A549 (cell line): ENCODE measurements at regions of chr19 and their contacts with region 1.

Region 1: DNA sequence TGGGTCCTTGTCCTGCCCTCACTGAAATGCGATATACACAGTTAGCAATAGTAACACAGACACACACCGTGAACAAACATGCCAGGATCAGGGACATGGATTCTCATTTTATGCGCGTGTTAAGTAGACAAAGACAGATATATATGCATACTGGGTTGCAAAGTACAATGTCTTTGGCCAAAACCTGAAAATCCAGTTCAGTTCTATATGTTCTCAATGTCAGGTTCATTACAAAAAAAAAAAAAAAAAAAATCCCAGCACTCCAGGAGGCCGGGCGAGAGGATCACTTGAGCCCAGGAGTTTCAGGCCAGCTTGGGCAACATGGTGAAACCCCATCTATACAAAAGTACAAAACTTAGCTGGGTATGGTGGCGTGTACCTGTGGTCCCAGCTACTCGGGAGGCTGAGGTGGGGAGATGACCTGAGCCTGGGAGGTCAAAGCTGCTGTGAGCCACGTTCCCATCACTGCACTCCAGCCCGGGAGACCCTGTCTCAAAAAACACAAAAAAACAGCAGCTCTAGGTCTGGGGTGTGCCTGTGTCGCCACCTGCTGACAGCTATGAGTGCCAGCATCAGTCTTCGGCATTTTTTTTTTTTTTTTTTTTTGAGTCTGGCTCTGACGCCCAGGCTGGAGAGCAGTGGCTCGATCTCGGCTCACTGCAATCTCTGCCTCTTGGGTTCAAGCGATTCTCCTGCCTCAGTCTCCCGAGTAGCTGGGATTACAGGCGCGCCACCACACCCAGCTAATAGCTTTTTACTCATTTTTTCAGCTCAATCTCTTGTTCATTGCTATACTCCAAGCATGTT is 10.3 kb downstream of the AP2S1 start:
- DNase-seq: peak in 1 of 2 experiments; percentile 77
- ATAC-seq: peak; percentile 61 to 77; a peak in 5 of 6 replicates
- H3K4me3 ChIP-seq: no peak overlapping the region
- H3K27ac ChIP-seq: peak overlapping the region in 1 of 2 experiments; percentile 20; a peak in 2 of 6 replicates
- H3K4me1 ChIP-seq: peaks cover 18% of the 10 kb centered on the region; the same call in 2 of the 3 replicates
- CTCF ChIP-seq: peak; percentile 96
- EP300 ChIP-seq: no peak
- POLR2A ChIP-seq: no peak
- RAD21 ChIP-seq: peak; percentile 95

Region 2: DNA sequence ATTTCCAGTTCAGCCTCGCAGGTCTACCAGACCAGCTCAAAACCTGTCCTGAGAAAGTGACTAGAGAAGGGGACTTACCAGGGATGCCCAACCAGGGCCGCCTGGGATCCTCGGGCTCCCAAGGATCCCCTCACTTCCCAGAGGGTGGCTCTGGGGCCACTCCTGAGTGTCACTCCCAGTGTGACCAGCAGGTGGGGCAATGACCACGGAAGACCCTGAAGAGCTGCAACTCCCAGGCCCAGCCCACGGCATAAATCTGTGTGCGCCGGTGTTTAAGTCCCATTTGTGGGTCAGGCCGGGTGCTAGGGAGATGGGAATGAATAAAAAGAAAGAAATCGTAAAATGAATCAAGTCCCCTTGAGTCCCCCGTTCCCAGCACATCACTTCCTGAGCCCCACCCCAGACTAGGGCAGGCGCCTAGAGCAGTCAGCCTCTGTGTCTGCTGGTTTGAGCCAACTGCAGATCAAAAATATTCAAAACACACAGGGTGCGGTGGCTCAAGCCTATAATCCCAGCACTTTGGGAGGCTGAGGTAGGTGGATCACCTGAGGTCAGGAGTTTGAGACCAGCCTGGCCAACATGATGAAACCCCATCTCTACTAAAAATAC is 226.1 kb before region 1 on chr19:
- CTCF ChIA-PET with region 1: interaction called, 10 read pairs
- POLR2A ChIA-PET with region 1: no interaction called
- DNase-seq: peak; percentile 86 to 97
- ATAC-seq: peak; percentile 80 to 92
- H3K4me3 ChIP-seq: no peak overlapping the region
- H3K27ac ChIP-seq: peak overlapping the region; percentile 18 to 52; a peak in 2 of 6 replicates
- H3K4me1 ChIP-seq: 0 out of 3 replicates have a peak, but pooled peaks cover 8% of the 10 kb centered on the region
- CTCF ChIP-seq: peak; percentile 91
- EP300 ChIP-seq: no peak
- POLR2A ChIP-seq: no peak
- RAD21 ChIP-seq: peak; percentile 79 to 84

Region 3: GRCh38 chr19:46736544-46737297 is 103.6 kb before region 1 on chr19:
- CTCF ChIA-PET with region 1: interaction called, 11 read pairs
- POLR2A ChIA-PET with region 1: no interaction called
- DNase-seq: no peak
- ATAC-seq: no peak
- H3K4me3 ChIP-seq: no peak overlapping the region
- H3K27ac ChIP-seq: no peak overlapping the region
- H3K4me1 ChIP-seq: peaks cover 24% of the 10 kb centered on the region
- CTCF ChIP-seq: no peak
- EP300 ChIP-seq: no peak
- POLR2A ChIP-seq: no peak
- RAD21 ChIP-seq: no peak

Region 4: GRCh38 chr19:46788262-46788967 is 51.9 kb before region 1 on chr19 and contains the start of gene SLC1A5:
- CTCF ChIA-PET with region 1: interaction called, 130 read pairs
- POLR2A ChIA-PET with region 1: interaction called, 51 read pairs
- DNase-seq: peak; percentile 99
- ATAC-seq: peak; percentile 51 to 77
- H3K4me3 ChIP-seq: peak within 1 kb of the TSS; percentile 66
- H3K27ac ChIP-seq: peak within 1 kb of the TSS; percentile 96 to 97
- H3K4me1 ChIP-seq: peaks cover 40% of the 10 kb centered on the region
- CTCF ChIP-seq: peak; percentile 4; the same call in 1 of the 3 replicates
- EP300 ChIP-seq: 0 out of 5 replicates have a peak, but pooled peaks of 1 of the 2 experiments have one; percentile 13
- POLR2A ChIP-seq: peak; percentile 100
- RAD21 ChIP-seq: peak; percentile 20 to 28; a peak in 3 of 5 replicates
- polyA plus RNA-seq, gene SLC1A5: 302 and 306 TPM in 2 replicates

Region 5: DNA sequence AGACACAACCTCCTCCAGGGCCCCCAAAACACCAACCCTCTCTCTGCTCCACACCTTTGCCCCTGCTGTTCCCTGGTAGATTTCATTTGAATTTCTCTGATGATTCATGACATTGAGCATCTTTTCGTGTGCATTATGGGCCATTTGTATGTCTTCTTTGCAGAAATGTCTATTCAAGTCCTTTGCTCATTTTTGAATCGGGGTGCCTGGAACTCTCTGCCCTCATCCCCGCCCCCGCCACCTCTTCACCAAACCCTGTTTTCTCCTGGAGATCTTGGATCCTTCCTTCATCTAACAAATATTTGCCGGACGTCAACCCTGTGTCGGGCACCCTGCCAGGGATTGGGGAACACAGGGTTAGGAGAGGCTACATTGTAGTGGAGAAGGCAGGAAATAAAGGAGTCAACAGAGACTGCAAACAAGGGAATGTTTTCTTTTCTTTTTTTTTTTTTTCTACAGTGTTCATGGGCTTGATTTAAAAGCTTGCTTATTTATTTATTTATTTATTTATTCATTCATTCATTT is 26.4 kb before region 1 on chr19:
- CTCF ChIA-PET with region 1: interaction called, 16 read pairs
- POLR2A ChIA-PET with region 1: no interaction called
- DNase-seq: peak; percentile 47 to 84
- ATAC-seq: peak; percentile 65 to 75
- H3K4me3 ChIP-seq: no peak overlapping the region
- H3K27ac ChIP-seq: peak overlapping the region; percentile 38 to 74
- H3K4me1 ChIP-seq: peaks cover 18% of the 10 kb centered on the region
- CTCF ChIP-seq: no peak
- EP300 ChIP-seq: no peak
- POLR2A ChIP-seq: no peak
- RAD21 ChIP-seq: no peak

Region 6: GRCh38 chr19:46828484-46828883 is 11.9 kb before region 1 on chr19:
- CTCF ChIA-PET with region 1: interaction called, 56 read pairs
- POLR2A ChIA-PET with region 1: interaction called, 3 read pairs
- DNase-seq: no peak
- ATAC-seq: no peak
- H3K4me3 ChIP-seq: no peak overlapping the region
- H3K27ac ChIP-seq: no peak overlapping the region
- H3K4me1 ChIP-seq: peaks cover 10% of the 10 kb centered on the region
- CTCF ChIP-seq: no peak
- EP300 ChIP-seq: no peak
- POLR2A ChIP-seq: no peak
- RAD21 ChIP-seq: no peak

Region 7: GRCh38 chr19:46866387-46867152 is 26.2 kb after region 1 on chr19:
- CTCF ChIA-PET with region 1: no interaction called
- POLR2A ChIA-PET with region 1: no interaction called
- DNase-seq: peak; percentile 58 to 62
- ATAC-seq: peak in 1 of 2 experiments; percentile 60; a peak in 3 of 6 replicates
- H3K4me3 ChIP-seq: peak overlapping the region; percentile 4; the same call in 1 of the 3 replicates
- H3K27ac ChIP-seq: peak overlapping the region; percentile 62 to 81
- H3K4me1 ChIP-seq: peaks cover 76% of the 10 kb centered on the region
- CTCF ChIP-seq: no peak
- EP300 ChIP-seq: peak in 1 of 2 experiments; percentile 37; a peak in 1 of 5 replicates
- POLR2A ChIP-seq: no peak
- RAD21 ChIP-seq: no peak